Dendritic cell treated with granulocyte-macrophage colony-stimulating factor and Interleukin-4, amounts not matched to agents 40 ng/mL and 50 ng/mL, for 4 days (primary cell): ENCODE measurements at regions of chr1 and their contacts with region 1.

Region 1: GRCh38 chr1:42924082-42924850 is 34.4 kb downstream of the SLC2A1 start:
- H3K4me3 Mint-ChIP-seq: peak overlapping the region; percentile 88
- H3K27ac Mint-ChIP-seq: peak overlapping the region; percentile 93
- H3K4me1 Mint-ChIP-seq: peaks cover 29% of the 10 kb centered on the region
- H3K27me3 Mint-ChIP-seq: no peaks in the 10 kb centered on the region

Region 2: GRCh38 chr1:42958488-42959319 is 34.4 kb after region 1 on chr1 and contains the start of gene SLC2A1:
- intact Hi-C with region 1: loop called (anchors 5 kb)
- H3K4me3 Mint-ChIP-seq: peak within 1 kb of the TSS; percentile 83
- H3K27ac Mint-ChIP-seq: peak within 1 kb of the TSS; percentile 76
- H3K4me1 Mint-ChIP-seq: peaks cover 36% of the 10 kb centered on the region
- H3K27me3 Mint-ChIP-seq: peaks cover 59% of the 10 kb centered on the region